ENCODE measurements at regions of chr14 and their contacts with region 1.

Region 1: DNA sequence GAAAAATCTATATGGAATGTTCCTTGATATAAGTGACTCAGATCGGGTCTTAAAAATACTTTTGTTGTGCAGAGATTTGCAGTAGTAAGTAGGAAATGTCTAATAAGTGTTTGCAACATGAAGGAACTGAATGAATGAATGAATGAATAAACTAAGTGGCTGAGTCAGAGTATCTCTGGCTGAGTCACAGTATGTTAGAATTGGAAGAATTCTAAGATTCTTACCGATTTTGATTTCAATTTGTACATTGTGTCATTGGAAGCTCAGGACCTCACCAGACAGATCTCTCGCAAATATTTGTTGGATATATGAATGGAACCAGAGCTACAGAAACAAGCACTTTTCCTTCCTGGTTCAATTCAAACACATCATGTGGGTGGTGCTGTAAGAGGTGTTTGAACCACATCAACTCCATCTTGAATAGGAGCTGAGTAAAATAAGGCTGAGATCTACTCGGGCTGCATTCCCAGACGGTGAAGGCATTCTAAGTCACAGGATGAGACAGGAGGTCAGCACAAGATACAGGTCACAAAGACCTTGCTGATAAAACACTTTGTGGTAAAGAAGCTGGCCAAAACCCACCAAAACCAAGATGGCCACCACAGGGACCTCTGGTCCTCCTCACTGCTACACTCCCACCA is 123.9 kb upstream of the FOXN3 start:
- DNase-seq: no peak
- ATAC-seq: no peak
- H3K4me3 ChIP-seq: no peak overlapping the region
- H3K27ac ChIP-seq: peak overlapping the region; percentile 45
- H3K4me1 ChIP-seq: peaks cover 65% of the 10 kb centered on the region
- H3K27me3 ChIP-seq: no peaks in the 10 kb centered on the region
- CTCF ChIP-seq: no peak
- EP300 ChIP-seq: no peak
- POLR2A ChIP-seq: no peak
- RAD21 ChIP-seq: no peak

Region 2: GRCh38 chr14:89391123-89391522 is 149.8 kb before region 1 on chr14:
- CTCF ChIA-PET with region 1: no interaction called
- POLR2A ChIA-PET with region 1: no interaction called
- in situ Hi-C with region 1: no loop called
- intact Hi-C with region 1: loop called (anchors 1 kb)
- DNase-seq: peak; percentile 92
- ATAC-seq: peak; percentile 84
- H3K4me3 ChIP-seq: peak overlapping the region in 2 of 3 experiments; percentile 37 to 41; a peak in 3 of 6 replicates
- H3K27ac ChIP-seq: peak overlapping the region; percentile 87
- H3K4me1 ChIP-seq: peaks cover 99% of the 10 kb centered on the region
- H3K27me3 ChIP-seq: no peaks in the 10 kb centered on the region
- CTCF ChIP-seq: no peak
- EP300 ChIP-seq: peak; percentile 36 to 93; a peak in 2 of 4 replicates
- POLR2A ChIP-seq: no peak
- RAD21 ChIP-seq: no peak

Region 3: DNA sequence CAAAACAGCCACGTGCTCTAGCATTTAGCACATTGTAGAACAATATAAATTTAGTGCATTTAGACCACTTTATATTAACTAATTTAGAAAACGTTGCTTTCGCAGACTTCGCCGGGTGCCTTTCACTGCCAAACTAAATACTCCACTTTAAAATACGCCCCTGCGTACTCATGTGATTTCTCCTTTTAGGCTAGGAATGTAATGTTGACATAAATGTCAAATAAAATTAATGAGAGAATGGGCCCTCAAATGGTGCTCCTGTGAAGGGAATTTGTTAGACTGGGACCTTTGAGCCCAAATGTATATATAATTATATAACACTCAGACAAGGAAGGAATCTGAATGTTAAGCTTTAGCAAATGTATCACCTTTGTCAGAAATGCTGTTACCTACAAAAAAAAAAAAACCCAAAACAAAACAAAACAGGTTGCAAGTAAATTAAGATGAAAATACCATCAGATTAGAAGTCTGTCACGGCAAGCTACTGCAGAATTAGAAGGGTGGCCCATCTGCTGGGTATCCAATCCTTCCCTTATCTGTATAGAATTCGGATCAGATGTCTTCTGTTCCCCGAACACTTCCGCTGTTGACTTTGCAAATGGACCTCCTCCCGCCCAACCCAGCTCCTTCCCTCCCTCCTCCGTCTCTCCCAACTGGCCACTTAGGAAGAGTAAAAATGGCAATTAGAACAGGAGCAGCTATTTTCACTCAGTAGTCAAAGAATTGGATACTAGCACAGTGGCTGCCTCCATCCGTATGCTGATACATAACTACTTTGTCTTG is 35.4 kb after region 1 on chr14:
- CTCF ChIA-PET with region 1: no interaction called
- POLR2A ChIA-PET with region 1: no interaction called
- in situ Hi-C with region 1: no loop called
- intact Hi-C with region 1: no loop called
- DNase-seq: no peak
- ATAC-seq: no peak
- H3K4me3 ChIP-seq: no peak overlapping the region
- H3K27ac ChIP-seq: no peak overlapping the region
- H3K4me1 ChIP-seq: peaks cover 6% of the 10 kb centered on the region; the same call in 1 of the 2 replicates
- H3K27me3 ChIP-seq: no peaks in the 10 kb centered on the region
- CTCF ChIP-seq: no peak
- EP300 ChIP-seq: no peak
- POLR2A ChIP-seq: no peak
- RAD21 ChIP-seq: no peak

Region 4: DNA sequence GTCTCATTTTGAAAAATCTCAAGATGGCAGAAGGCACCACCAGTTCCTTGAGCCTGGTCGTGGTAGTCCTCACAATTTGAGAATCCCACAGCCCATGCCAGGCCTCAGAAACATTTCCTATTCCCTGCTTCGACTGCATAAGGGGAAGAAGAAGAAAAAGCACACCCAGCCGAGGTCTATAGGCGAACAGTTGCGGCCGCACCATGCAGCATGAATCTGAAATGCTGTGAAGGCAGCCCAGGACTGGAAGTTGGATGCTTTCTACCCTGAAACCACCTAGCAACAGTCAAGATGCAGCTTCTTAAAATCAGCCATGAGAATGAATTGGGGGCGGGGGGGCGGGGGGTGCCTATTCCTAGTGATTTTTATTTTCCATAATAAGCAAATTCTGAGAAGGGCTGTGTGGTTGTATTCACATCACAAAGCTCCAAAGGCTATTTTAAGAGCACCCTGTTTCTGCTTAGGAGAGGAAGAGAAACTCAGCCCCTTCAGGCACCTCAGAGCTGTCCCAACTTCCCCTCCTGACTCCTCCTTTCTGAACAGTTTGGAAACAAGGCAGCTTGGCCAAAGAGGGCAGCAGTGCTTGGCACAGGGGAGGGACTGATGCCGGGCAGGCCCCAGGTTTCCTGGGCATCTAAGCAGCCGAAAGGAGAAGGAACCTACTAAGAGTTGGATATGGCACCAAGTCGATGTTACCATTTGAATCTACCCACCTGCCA is 48.6 kb after region 1 on chr14:
- CTCF ChIA-PET with region 1: no interaction called
- POLR2A ChIA-PET with region 1: no interaction called
- in situ Hi-C with region 1: no loop called
- intact Hi-C with region 1: loop called (anchors 5 kb)
- DNase-seq: no peak
- ATAC-seq: peak; percentile 58
- H3K4me3 ChIP-seq: no peak overlapping the region
- H3K27ac ChIP-seq: peak overlapping the region; percentile 46
- H3K4me1 ChIP-seq: peaks cover 59% of the 10 kb centered on the region
- H3K27me3 ChIP-seq: no peaks in the 10 kb centered on the region
- CTCF ChIP-seq: no peak
- EP300 ChIP-seq: no peak
- POLR2A ChIP-seq: no peak
- RAD21 ChIP-seq: no peak